Naive thymus-derived CD4-positive, alpha-beta T cell (primary cell): ENCODE measurements at regions of chr1 and their contacts with region 1.

Region 1: GRCh38 chr1:229341774-229342655 is 832 bp downstream of the CCSAP start:
- DNase-seq: peak; percentile 78 to 87 (median 84)
- ATAC-seq: peak; percentile 92
- H3K4me3 ChIP-seq: peak overlapping the region; percentile 87
- H3K4me3 Mint-ChIP-seq: peak overlapping the region; percentile 88 to 96 (median 93)
- H3K27ac ChIP-seq: peak overlapping the region; percentile 88
- H3K27ac Mint-ChIP-seq: peak overlapping the region; percentile 72 to 93 (median 89)
- H3K4me1 ChIP-seq: peaks cover 5 to 7% of the 10 kb centered on the region in 2 donors
- H3K4me1 Mint-ChIP-seq: peaks cover 32 to 59% (median 49%) of the 10 kb centered on the region in 7 donors
- H3K27me3 ChIP-seq: no peaks in the 10 kb centered on the region
- H3K27me3 Mint-ChIP-seq: peaks cover 0 to 23% (median 7%) of the 10 kb centered on the region in 5 donors

Region 2: DNA sequence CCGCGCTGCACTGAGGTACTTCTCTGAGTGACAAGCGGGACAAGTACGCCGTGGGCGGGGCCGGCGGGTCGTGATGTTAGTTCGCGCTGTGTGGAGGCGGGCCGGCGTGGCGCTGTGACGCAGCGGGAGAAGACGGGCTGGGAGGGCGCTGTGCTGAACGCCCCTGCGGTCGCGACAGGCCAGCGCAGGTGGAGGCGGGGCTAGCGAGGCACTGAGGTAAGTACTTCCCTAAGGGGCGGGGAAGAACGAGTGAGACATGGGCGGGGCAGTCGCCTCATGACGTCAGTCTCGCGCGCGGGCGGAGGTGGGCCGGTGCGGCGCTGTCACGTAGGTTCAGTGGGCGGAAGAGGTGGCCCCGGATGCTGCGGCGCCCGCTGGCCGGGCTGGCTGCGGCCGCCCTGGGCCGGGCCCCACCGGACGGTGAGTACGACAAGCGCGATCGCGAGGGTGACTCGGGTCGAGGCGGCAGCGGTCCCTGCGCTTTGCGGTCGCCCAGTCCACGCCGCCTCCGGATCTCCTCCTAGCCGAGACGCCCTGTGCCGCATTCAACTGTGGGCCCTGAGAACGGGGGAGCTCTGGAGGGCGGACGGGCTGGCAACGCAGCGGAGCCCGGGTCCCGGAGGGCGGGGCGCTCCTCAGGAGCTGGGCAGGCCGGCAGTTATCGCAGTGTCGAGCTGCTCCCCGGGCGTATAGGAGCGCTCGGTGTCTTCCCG is 1201.9 kb before region 1 on chr1 and contains the start of gene GUK1:
- CTCF ChIA-PET with region 1: no interaction called
- POLR2A ChIA-PET with region 1: no interaction called
- intact Hi-C with region 1: loop called in 1 of 2 experiments (anchors 10 kb)
- DNase-seq: peak; percentile 98 to 100 (median 100)
- ATAC-seq: peak; percentile 93
- H3K4me3 ChIP-seq: peak within 1 kb of the TSS; percentile 88
- H3K4me3 Mint-ChIP-seq: peak within 1 kb of the TSS; percentile 87 to 99 (median 95)
- H3K27ac ChIP-seq: peak within 1 kb of the TSS; percentile 99
- H3K27ac Mint-ChIP-seq: peak within 1 kb of the TSS; percentile 83 to 100 (median 99)
- H3K4me1 ChIP-seq: peaks cover 42 to 49% of the 10 kb centered on the region in 2 donors
- H3K4me1 Mint-ChIP-seq: peaks cover 23 to 48% (median 34%) of the 10 kb centered on the region in 7 donors
- H3K27me3 ChIP-seq: no peaks in the 10 kb centered on the region
- H3K27me3 Mint-ChIP-seq: peaks cover 0 to 24% (median 0%) of the 10 kb centered on the region in 5 donors
- total RNA-seq, gene GUK1: 145 to 309 (median 279) TPM

Region 3: DNA sequence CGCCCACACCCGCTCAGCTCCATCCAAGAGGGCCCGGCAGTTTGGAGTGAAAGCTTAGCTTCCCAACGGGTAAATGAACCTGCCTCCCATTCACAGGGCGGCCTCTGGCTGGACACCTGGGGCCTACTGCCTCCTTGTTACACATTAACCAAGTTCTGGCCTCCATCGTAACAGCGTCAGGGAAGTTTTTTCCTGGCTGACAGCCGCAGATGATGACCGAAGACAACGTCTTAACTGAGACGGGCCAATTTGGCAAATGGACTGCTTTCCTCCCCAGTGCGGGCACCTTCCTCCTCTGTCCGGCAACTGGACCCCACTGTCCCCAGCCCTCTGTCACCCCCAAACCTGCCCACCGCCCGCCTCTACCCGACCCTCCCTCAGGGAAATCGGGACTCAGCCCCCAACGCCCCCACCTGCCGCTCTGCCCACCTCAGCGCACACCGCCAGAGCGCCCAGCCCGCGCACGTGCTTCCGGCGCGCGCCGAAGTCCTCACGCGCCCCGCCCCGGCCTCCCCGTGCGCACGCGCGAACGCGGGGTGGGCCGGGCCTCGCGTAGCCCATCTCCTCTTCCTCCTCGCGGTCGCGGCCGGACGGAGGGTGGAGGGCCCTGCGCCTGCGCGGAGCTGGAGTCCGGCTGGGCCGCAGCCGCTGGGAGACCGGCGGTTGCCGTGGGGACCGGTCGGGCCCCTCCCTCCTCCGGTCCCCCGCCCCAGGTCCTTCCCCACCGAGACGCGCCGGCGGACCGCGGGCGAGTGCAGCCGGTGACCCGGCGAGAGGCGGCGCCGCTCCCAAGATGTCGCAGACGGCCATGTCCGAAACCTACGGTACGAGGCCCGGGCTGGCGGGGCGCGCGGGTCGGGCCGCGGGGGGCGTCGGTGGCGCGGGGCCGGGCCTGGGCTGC is 71.2 kb before region 1 on chr1 and contains the start of gene RAB4A:
- CTCF ChIA-PET with region 1: no interaction called
- POLR2A ChIA-PET with region 1: interaction called, 5 read pairs
- intact Hi-C with region 1: loop called (anchors 1 kb)
- DNase-seq: peak; percentile 48 to 85 (median 75)
- ATAC-seq: peak; percentile 94
- H3K4me3 ChIP-seq: peak within 1 kb of the TSS; percentile 77
- H3K4me3 Mint-ChIP-seq: peak within 1 kb of the TSS; percentile 89 to 99 (median 94)
- H3K27ac ChIP-seq: peak within 1 kb of the TSS; percentile 62
- H3K27ac Mint-ChIP-seq: peak within 1 kb of the TSS; percentile 76 to 95 (median 89)
- H3K4me1 ChIP-seq: peaks cover 13 to 17% of the 10 kb centered on the region in 2 donors
- H3K4me1 Mint-ChIP-seq: peaks cover 25 to 45% (median 35%) of the 10 kb centered on the region in 7 donors
- H3K27me3 ChIP-seq: no peaks in the 10 kb centered on the region
- H3K27me3 Mint-ChIP-seq: no peaks in the 10 kb centered on the region
- total RNA-seq, gene RAB4A: 24.0 to 47.9 (median 36.9) TPM

Region 4: DNA sequence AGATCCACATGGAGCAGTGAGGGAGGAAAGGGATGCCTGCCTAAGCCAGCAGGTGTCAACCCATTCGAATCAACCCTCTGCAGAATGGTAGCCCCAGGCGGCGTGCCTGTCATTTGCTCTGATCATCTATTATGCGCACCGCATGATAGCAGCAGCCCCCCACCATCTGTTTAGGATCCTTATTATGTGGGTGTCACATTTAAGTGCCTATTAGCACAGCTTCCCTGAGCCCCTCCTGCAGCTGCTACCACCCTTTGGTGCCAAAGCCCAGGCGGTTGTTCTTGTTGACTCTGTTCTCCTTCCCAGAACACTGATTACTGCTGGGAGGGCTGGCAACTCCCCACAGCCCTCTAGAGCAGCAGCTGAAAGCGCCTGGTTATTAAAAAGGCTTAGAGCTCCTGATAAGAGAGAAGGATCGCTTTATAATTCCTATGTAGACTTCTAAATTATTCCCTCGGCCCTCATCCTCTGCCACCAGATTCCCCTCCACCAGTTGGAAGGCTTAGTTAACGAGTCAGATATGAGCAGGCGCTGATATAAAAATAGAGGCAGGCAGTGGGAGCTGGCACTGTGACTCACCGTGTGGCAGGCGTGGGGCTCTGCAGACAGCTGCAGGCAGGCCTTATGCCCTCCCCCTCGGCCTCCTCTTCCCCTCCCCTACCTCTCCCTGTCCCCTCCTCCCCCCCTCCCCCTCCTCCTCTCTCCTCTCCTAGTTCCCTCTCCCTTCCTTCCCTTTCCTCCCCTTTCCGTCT is 68.9 kb after region 1 on chr1:
- CTCF ChIA-PET with region 1: no interaction called
- POLR2A ChIA-PET with region 1: interaction called, 3 read pairs
- intact Hi-C with region 1: loop called in 1 of 2 experiments (anchors 5 kb)
- DNase-seq: no peak
- ATAC-seq: peak; percentile 44
- H3K4me3 ChIP-seq: no peak overlapping the region
- H3K4me3 Mint-ChIP-seq: peak overlapping the region in 5 of 10 donors; percentile 4 to 67 (median 65)
- H3K27ac ChIP-seq: no peak overlapping the region
- H3K27ac Mint-ChIP-seq: no peak overlapping the region
- H3K4me1 ChIP-seq: no peaks in the 10 kb centered on the region
- H3K4me1 Mint-ChIP-seq: peaks cover 7 to 21% (median 16%) of the 10 kb centered on the region in 7 donors
- H3K27me3 ChIP-seq: peaks cover 0 to 5% of the 10 kb centered on the region in 2 donors
- H3K27me3 Mint-ChIP-seq: peaks cover 38 to 74% (median 41%) of the 10 kb centered on the region in 5 donors

Region 5: DNA sequence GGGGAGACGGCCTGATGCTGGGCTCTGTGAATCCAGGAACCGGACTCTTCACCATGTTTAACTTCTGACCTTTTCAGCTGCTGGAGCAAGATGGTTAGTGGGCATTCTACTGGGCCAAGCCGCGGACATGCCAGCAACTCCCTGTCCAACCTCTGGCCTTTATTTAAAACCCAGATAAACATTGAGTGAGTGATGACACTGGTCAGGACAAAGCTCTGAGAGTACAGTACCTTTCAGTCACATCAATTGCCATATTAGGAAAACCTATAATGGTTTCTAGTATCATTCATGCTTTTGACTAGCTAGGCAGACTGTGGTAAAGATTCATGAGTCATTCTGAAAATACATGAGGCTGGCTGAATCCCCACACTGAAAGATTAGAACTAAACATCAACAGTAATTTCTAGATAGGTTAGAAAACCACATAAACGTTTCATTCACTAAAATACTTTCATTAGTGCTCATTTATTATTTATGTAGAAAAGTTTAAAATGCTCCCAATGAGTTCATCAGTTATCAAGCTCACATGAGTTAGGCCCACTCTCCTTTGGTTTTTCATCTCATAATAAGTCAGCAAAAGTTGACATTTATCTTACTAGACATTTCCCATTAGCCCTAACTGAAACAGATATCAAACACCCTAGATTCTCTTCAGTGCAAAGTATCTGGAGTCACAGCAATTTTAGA is 99.0 kb after region 1 on chr1:
- CTCF ChIA-PET with region 1: no interaction called
- POLR2A ChIA-PET with region 1: interaction called, 3 read pairs
- intact Hi-C with region 1: loop called in 1 of 2 experiments (anchors 5 kb)
- DNase-seq: no peak
- ATAC-seq: no peak
- H3K4me3 ChIP-seq: no peak overlapping the region
- H3K4me3 Mint-ChIP-seq: peak overlapping the region in 1 of 10 donors; percentile 48
- H3K27ac ChIP-seq: no peak overlapping the region
- H3K27ac Mint-ChIP-seq: peak overlapping the region in 5 of 9 donors; percentile 8 to 71 (median 58)
- H3K4me1 ChIP-seq: no peaks in the 10 kb centered on the region
- H3K4me1 Mint-ChIP-seq: peaks cover 0 to 22% (median 0%) of the 10 kb centered on the region in 7 donors
- H3K27me3 ChIP-seq: no peaks in the 10 kb centered on the region
- H3K27me3 Mint-ChIP-seq: peaks cover 0 to 26% (median 0%) of the 10 kb centered on the region in 5 donors

Region 6: DNA sequence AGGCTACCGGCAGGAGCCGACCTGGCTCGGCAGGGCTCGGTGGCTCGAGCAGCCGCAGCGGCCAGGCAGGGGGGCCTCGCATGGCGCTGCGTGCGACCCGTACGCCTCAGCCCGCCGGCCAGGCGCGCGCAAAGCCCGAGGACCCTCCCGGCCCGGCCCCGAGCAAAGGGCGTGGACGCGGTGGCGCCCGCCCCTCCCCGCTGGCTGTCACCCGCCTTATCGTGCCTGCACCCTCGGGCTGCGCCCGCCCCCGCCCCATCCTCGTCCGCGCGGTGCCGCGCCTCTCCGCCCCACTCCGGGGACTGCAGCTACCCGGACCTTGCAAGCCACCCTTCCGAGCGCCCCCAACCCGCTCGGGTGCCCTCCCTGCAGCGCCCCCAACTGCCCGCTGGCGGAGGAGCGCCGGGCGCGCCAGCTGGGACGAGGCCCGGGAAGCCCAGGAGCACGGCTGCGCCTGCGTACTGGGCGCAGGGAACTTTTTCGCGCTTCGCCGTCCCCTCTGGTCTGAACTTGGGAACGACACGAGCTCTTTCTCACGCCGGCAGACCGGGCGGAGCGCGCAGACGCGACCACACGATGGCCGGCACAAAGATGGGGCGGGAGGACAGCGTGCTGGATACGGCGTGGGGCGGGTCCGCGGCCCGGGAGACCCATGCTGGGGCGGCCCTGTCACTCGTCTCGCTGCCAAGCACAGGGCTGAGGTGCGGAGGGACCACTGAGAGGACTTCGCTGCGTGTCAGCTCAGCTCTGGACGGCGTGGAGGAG is 216.7 kb after region 1 on chr1 and contains the start of gene ABCB10:
- CTCF ChIA-PET with region 1: no interaction called
- POLR2A ChIA-PET with region 1: interaction called, 4 read pairs
- intact Hi-C with region 1: loop called (anchors 1 kb)
- DNase-seq: peak; percentile 68 to 96 (median 80)
- ATAC-seq: peak; percentile 85
- H3K4me3 ChIP-seq: peak within 1 kb of the TSS; percentile 88
- H3K4me3 Mint-ChIP-seq: peak within 1 kb of the TSS; percentile 91 to 97 (median 95)
- H3K27ac ChIP-seq: peak within 1 kb of the TSS; percentile 65
- H3K27ac Mint-ChIP-seq: peak within 1 kb of the TSS; percentile 64 to 92 (median 87)
- H3K4me1 ChIP-seq: peaks cover 15 to 16% of the 10 kb centered on the region in 2 donors
- H3K4me1 Mint-ChIP-seq: peaks cover 37 to 46% (median 41%) of the 10 kb centered on the region in 7 donors
- H3K27me3 ChIP-seq: no peaks in the 10 kb centered on the region
- H3K27me3 Mint-ChIP-seq: peaks cover 0 to 6% (median 0%) of the 10 kb centered on the region in 5 donors
- total RNA-seq, gene ABCB10: 14.1 to 31.9 (median 18.4) TPM